AG04450 (cell line): ENCODE measurements at regions of chr21 and their contacts with region 1.

Region 1: DNA sequence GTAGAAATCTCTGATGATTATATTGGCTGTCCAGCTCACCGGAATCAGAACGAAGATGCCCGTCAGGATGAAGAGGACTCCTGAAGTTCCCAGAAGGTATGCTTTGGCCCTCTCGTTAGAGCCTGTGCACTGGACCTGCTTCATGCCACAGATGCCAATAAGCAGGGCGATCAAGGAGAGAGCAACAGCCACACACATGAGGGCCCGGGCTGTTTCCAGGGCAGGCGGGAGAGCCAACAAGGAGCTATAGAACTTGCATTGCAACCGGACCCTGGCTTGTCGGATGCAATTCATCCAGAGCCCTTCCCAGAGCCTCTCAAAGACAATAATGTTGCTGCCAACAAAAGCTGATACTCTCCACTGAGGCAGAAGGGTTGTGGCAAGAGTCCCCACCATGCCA is 434 bp downstream of the CLDN17 start:
- DNase-seq: no peak
- H3K4me3 ChIP-seq: no peak overlapping the region
- H3K27ac ChIP-seq: no peak overlapping the region
- H3K27me3 ChIP-seq: no peaks in the 10 kb centered on the region
- CTCF ChIP-seq: no peak

Region 2: GRCh38 chr21:30391492-30392025 is 225.4 kb after region 1 on chr21:
- CTCF ChIA-PET with region 1: no interaction called
- POLR2A ChIA-PET with region 1: interaction called, 10 read pairs
- DNase-seq: no peak
- H3K4me3 ChIP-seq: no peak overlapping the region
- H3K27ac ChIP-seq: no peak overlapping the region
- H3K27me3 ChIP-seq: no peaks in the 10 kb centered on the region
- CTCF ChIP-seq: no peak